A673 (cell line): ENCODE measurements at regions of chr2 and their contacts with region 1.

Region 1: GRCh38 chr2:29747786-29748494 is 173.4 kb downstream of the ALK start:
- DNase-seq: peak; percentile 90
- H3K4me3 ChIP-seq: no peak overlapping the region
- H3K27ac ChIP-seq: no peak overlapping the region
- H3K4me1 ChIP-seq: peaks cover 22% of the 10 kb centered on the region
- H3K27me3 ChIP-seq: no peaks in the 10 kb centered on the region
- CTCF ChIP-seq: no peak

Region 2: GRCh38 chr2:29309090-29310029 is 438.6 kb before region 1 on chr2:
- CTCF ChIA-PET with region 1: no interaction called
- POLR2A ChIA-PET with region 1: no interaction called
- intact Hi-C with region 1: loop called (anchors 10 kb)
- DNase-seq: peak; percentile 89
- H3K4me3 ChIP-seq: no peak overlapping the region
- H3K27ac ChIP-seq: no peak overlapping the region
- H3K4me1 ChIP-seq: peaks cover 21% of the 10 kb centered on the region
- H3K27me3 ChIP-seq: no peaks in the 10 kb centered on the region
- CTCF ChIP-seq: peak; percentile 89

Region 3: DNA sequence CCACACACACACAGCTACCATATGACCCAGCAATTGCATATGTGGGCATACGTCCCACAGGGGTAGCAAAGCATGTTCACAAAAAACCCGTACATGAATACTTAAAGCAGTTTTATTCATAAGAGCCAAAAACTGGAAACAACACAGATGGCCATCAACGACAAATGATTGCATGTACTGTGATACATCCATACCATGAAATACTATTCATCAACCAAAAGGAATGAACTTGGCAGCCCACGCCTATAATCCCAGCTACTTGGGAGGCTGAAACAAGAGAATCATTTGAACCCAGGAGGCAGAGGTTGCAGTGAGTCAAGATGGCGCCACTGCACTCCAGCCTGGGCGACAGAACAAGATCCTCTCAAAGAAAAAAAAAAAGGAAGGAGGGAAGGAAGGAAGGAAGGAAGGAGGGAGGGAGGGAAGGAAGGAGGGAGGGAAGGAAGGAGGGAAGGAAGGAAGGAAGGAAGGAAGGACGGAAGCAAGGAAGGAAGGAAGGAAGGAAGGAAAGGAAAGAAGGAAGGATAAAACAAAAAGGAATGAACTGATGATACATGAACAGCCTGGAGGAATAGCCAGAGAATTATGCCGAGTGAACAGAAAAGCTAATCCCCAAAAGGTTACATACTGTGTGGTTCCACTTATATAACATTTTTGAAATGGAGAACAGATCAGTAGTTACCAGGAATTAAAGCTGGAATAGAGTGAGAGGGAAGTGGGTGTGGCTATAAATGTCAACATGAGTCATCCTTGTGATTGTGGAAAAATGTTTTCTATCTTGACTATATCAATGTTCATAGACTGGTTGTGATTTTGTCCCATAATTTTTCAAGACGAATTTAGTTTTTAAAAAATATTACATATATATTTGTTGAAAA is 379.3 kb after region 1 on chr2:
- CTCF ChIA-PET with region 1: no interaction called
- POLR2A ChIA-PET with region 1: interaction called, 10 read pairs
- intact Hi-C with region 1: loop called (anchors 2 kb)
- DNase-seq: peak; percentile 96
- H3K4me3 ChIP-seq: peak overlapping the region; percentile 17
- H3K27ac ChIP-seq: peak overlapping the region; percentile 99
- H3K4me1 ChIP-seq: peaks cover 27% of the 10 kb centered on the region
- H3K27me3 ChIP-seq: no peaks in the 10 kb centered on the region
- CTCF ChIP-seq: no peak